ENCODE measurements at regions of chr5 and their contacts with region 1.

Region 1: GRCh38 chr5:175829813-175830585 is 41.4 kb upstream of the CPLX2 start:
- DNase-seq: no peak

Region 2: GRCh38 chr5:174520420-174521380 is 1309.3 kb before region 1 on chr5:
- intact Hi-C with region 1: loop called in 1 of 2 experiments (anchors 5 kb)
- DNase-seq: no peak

Region 3: DNA sequence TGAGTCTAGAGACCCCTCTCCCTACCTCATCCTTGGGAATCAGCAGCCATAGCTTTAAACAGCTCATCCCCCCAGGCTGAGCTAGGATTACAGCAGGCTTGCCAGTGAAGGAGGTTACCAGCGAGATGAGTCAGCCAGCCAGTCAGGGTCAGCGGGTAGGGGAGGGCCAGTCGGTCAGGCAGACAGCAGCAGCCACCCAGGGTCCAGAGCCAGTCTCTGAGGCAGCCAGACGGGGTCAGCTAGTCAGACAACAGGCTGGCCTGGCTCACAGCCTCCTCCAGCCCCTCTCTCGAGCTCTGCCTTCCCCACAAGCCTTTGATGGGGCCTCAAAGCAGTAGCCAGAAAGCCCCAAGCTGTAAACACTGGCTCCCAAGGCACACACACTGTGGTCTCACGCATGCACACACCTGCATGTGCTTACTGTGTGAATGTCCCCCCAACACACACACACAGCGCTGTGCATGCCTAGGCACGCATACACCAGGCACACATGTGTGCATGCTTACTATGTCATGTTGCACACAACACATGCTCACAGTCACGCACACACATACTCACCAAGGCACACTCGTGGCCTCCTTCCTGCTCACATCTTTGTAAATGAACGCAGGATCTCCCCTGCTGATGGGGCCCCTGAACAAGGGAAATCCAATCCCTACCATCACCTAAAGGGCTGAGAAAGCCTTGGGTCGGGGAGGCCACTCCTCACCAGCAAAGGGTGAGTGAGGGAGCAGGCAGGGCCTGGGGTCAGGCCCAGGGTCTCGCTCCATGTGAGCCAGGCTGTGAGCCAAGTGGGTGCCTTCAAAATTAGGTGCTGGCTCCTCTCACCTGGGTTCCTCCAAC is 13.2 kb after region 1 on chr5:
- intact Hi-C with region 1: no loop called
- DNase-seq: no peak

Region 4: GRCh38 chr5:175902026-175902425 is 72.0 kb after region 1 on chr5:
- intact Hi-C with region 1: no loop called
- DNase-seq: no peak

Region 5: DNA sequence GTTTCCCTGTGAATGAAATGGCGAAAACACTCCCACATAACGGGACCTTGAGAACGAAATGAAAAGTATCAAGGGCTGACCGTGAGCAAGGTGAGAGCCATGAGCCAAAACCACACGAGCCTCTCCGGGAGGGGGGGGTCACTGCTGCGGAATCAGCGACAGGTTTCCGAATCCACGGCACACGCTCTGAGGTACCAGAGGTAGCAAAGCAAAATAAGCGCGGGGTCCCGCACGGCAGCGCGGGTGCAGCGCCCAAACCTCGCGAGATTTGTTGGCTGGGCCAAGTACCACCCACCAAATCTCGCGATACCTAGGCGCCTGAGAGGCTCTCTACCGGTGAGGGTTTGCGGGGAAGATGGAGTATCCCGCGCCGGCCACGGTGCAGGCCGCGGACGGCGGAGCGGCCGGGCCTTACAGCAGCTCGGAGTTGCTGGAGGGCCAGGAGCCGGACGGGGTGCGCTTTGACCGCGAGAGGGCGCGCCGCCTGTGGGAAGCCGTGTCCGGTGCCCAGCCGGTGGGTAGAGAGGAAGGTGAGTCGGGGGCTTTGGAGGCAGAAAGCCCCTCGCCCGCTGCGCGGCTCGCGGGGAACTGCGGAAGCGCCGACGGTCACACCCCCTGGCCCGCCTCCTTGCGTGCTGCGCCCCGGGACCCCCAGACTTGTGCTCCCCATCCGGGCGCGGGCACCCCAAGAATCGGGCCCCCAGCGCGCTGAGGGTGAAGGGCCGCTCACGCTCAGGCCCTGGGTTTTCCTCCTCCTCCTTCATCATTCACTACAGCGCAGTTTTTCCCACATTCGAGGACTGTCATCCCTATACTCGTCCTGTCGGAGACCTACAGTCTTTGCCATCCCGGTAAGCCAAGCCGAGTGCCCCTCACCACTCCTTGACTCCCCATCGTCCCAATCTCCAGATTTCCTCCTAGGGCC is 1192.6 kb after region 1 on chr5 and contains the start of gene ZNF346:
- intact Hi-C with region 1: no loop called
- DNase-seq: peak; percentile 97
- total RNA-seq, gene ZNF346: 11.6 to 12.5 TPM

Measured in posterior vena cava (tissue), 2 donors.